ENCODE measurements at regions of chr11 and their contacts with region 1.

Region 1: DNA sequence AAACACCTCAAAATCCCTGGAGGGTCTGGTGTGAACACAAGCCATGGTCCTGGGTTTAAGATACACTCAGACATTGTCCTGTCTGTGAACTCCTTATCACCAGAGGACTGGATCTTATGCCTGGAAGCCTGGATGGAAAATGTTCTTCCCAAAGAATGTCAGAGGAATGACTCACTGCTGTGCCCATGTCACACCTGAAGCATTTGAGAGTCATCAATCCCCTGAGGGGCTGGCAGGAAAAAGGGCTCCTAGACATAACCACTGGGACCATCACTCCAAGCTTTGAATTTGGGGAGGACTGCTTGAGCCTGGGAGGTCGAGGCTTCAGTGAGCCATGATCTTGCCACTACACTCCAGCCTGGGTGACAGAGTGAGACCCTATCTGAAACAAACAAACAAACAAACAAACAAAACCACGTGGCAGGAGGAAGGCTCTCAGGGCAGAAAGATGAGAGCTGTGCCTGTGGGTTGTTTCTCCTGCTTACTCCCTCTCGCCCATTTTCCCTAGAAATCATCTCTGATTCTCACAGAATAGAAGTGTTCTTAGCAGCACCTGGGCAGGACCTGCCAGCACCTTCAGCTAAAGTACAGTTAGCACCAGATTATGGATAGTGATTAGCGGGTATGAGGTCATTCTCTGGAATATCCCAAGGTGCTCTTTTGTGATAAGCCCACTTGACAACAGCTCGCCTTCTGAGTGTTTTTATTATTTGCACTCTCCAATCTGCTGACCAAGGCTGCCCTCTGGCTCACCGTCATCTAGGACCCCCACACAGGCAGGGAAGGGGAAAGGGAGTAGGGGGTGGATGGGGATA is 11.9 kb upstream of the PRG2 start:
- DNase-seq: no peak
- H3K4me3 ChIP-seq: no peak overlapping the region
- H3K4me3 Mint-ChIP-seq: no peak overlapping the region
- H3K27ac Mint-ChIP-seq: no peak overlapping the region
- H3K4me1 ChIP-seq: peaks cover 22% of the 10 kb centered on the region
- H3K4me1 Mint-ChIP-seq: no peaks in the 10 kb centered on the region
- H3K27me3 ChIP-seq: no peaks in the 10 kb centered on the region
- H3K27me3 Mint-ChIP-seq: no peaks in the 10 kb centered on the region
- CTCF ChIP-seq: no peak

Region 2: DNA sequence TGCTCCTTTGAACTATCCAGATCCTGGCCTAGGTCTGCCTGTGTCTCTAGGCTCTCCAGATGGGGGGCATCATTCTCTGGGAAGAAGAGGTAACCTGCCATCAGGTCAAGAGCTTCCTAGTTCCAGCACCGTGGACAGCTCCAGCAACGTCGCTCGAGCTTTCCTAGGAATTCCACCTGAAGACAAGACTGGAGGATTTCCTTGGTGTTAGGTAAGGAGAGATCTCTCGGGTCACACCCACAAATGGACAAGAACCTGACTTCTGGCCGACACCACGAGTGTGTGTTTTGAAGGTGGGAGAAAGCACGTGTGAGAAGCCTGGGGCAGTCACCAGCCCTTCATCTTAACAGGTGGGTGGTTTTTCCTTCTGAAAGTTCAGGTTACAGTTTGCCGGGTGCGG is 22.7 kb before region 1 on chr11:
- CTCF ChIA-PET with region 1: no interaction called
- POLR2A ChIA-PET with region 1: no interaction called
- intact Hi-C with region 1: loop called (anchors 2 kb)
- DNase-seq: peak; percentile 54 to 70
- H3K4me3 ChIP-seq: no peak overlapping the region
- H3K4me3 Mint-ChIP-seq: no peak overlapping the region
- H3K27ac Mint-ChIP-seq: no peak overlapping the region
- H3K4me1 ChIP-seq: no peaks in the 10 kb centered on the region
- H3K4me1 Mint-ChIP-seq: no peaks in the 10 kb centered on the region
- H3K27me3 ChIP-seq: no peaks in the 10 kb centered on the region
- H3K27me3 Mint-ChIP-seq: peaks cover 10% of the 10 kb centered on the region
- CTCF ChIP-seq: no peak

Region 3: DNA sequence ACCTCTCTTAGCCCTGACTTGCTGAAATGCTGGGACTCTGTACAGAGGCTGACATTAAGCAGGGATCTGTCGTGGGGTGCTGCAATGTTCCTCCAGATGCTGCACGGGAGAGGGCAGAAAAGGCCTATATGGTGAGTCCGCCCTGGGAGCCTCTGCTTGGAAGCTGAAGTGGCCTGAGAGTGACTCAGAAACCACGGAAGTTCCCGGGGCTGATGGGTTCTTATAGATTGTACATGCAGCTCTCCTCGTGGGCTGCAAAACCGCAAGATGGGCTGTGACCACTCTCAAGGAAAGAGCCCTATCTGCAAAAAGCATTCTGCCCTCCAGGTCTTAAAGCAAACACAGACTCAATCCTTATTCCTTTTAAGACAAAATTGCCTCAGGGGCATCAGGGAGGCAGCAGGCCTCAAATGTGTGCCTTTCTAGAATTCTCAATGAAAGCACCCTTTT is 30.3 kb after region 1 on chr11:
- CTCF ChIA-PET with region 1: no interaction called
- POLR2A ChIA-PET with region 1: no interaction called
- intact Hi-C with region 1: loop called (anchors 2 kb)
- DNase-seq: no peak
- H3K4me3 ChIP-seq: no peak overlapping the region
- H3K4me3 Mint-ChIP-seq: no peak overlapping the region
- H3K27ac Mint-ChIP-seq: no peak overlapping the region
- H3K4me1 ChIP-seq: 0 out of 2 replicates have a peak, but pooled peaks cover 4% of the 10 kb centered on the region
- H3K4me1 Mint-ChIP-seq: peaks cover 10% of the 10 kb centered on the region
- H3K27me3 ChIP-seq: no peaks in the 10 kb centered on the region; the same call in 1 of the 2 replicates
- H3K27me3 Mint-ChIP-seq: peaks cover 2% of the 10 kb centered on the region
- CTCF ChIP-seq: no peak

Region 4: DNA sequence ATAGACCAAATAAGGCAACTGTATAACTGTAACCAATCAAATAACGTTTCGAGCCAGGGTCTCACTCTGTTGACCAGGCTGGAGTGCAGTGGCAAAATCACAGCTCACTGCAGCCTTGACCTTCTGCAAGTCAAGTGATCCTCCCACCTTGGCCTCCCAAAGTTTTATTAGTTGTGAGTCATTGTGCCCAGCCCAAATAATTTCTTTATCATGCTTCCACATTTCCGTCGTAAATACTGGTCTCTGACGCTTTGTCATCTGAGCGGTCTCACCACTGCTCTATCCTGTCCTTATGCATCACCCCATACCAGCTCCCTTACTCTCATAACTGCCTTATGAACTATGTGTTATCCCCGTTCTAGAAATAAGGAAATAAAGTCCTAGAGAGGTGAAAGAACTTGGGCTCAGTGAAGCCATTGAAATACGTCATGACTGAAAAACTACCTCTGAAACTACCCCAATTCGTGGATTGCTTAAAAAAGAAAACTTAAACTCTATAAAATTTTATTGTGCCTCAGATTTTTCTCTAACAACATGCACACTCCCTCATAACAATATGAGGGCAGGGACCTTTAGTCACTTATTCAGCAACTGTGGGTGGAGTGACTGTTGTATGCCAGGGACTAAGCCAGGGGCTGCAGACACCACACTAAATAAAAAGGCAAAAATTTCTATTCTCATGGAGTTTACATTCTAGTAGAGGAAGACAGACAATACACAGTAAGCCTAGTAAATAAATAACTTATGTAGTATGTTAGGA is 42.1 kb after region 1 on chr11:
- CTCF ChIA-PET with region 1: no interaction called
- POLR2A ChIA-PET with region 1: no interaction called
- intact Hi-C with region 1: loop called (anchors 5 kb)
- DNase-seq: no peak
- H3K4me3 ChIP-seq: no peak overlapping the region
- H3K4me3 Mint-ChIP-seq: no peak overlapping the region
- H3K27ac Mint-ChIP-seq: peak overlapping the region; percentile 49
- H3K4me1 ChIP-seq: peaks cover 7% of the 10 kb centered on the region
- H3K4me1 Mint-ChIP-seq: peaks cover 10% of the 10 kb centered on the region
- H3K27me3 ChIP-seq: no peaks in the 10 kb centered on the region
- H3K27me3 Mint-ChIP-seq: no peaks in the 10 kb centered on the region
- CTCF ChIP-seq: no peak